ENCODE measurements at regions of chr3 and their contacts with region 1.

Region 1: DNA sequence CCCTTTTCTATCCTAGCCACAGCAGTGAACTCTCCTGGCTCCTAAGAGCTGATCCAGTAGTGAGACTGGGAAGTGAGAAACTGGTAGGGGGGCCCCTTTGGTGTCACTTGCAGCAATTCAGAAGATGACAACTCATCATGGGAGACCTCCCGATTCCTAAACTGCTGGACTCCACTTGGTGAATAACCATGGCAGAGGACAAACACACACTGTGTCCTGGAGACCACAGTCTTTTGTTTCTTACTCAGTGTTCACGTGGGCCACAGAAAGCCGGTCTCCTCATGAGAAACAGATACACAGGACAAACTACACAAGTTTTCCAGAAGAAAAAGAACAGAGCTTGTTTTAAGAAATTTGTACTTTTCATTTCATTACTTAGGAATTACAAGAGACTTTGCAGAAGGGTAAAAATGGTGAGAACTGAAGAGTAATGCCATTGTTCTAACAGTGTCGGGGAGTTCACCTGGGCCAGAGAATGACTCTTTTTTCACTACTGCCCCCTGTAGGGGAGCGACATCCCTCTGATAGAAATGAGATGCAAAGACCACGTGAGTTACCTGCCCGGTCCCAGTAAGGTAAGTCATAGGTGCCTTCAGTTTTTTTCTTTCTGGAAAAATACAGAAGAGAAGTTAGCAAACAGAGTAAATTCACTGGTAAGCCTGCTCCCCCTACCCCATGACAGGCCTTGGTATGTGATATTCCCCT is 38.1 kb downstream of the ST3GAL6 start:
- DNase-seq: no peak
- H3K4me3 ChIP-seq: no peak overlapping the region
- H3K27ac ChIP-seq: no peak overlapping the region
- H3K4me1 ChIP-seq: no peaks in the 10 kb centered on the region
- H3K27me3 ChIP-seq: no peaks in the 10 kb centered on the region
- CTCF ChIP-seq: no peak
- POLR2A ChIP-seq: no peak

Region 2: DNA sequence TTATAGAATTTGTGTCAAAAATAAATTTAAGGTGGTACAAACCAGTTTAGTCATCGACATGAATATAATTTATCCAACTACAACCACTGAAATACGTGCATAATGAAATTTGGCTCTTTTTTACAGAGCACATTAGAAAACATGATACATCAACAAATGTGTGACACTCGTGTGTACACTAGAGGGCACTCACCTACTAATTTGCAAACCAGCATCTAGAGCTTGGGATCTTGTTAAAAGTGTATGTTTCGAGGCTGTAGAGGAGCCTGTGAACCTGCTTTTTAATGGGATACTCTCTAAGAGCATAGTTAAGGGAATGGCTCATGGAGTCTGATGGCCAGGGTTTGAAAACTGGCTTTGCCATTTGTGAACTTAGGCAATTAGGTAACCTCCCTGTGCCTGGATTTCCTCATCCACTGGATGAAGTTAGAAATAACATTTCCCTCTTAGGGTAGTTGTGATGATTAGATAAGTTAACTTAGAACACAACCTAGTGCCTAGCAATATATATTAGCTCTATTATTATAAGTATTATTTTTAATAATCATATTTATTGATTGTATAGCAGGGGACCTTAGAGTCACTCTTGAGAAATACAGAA is 199.0 kb before region 1 on chr3:
- intact Hi-C with region 1: loop called (anchors 5 kb)
- DNase-seq: no peak
- H3K4me3 ChIP-seq: no peak overlapping the region
- H3K27ac ChIP-seq: no peak overlapping the region
- H3K4me1 ChIP-seq: no peaks in the 10 kb centered on the region
- H3K27me3 ChIP-seq: no peaks in the 10 kb centered on the region
- CTCF ChIP-seq: peak; percentile 33 to 58 (median 54)
- POLR2A ChIP-seq: no peak

Region 3: DNA sequence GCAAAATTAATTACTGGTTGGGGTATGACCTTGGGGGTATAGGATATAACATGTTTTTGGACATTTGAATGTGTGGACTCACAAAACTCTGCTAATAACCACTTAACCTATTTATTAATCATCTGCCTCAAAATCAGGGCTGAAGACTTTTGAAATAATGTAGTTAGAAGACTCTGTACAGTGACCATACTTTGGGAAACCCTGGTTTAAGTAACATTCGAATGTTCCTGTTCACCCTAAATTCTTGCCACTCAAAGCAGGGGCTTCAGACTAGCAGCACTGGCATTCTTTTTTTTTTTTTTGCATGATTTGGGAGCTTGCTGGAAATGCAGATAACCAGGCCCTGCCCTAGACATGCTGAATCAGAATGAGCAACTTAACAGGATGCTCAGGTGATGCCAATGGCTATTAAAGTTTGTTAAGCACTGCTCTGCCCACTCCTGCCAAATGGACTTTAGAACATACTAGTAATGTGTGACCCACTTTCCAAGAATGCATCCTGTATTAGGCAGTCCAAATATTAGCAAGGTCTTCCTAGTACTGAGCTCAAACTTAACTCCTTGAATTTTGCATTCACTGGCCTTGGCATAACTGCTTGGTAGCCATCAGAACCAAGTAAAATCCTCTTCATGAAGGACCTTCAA is 50.8 kb before region 1 on chr3:
- intact Hi-C with region 1: loop called (anchors 10 kb)
- DNase-seq: no peak
- H3K4me3 ChIP-seq: no peak overlapping the region
- H3K27ac ChIP-seq: no peak overlapping the region
- H3K4me1 ChIP-seq: no peaks in the 10 kb centered on the region
- H3K27me3 ChIP-seq: no peaks in the 10 kb centered on the region
- CTCF ChIP-seq: no peak
- POLR2A ChIP-seq: no peak

Measured in breast epithelium (tissue), 4 donors.